Head of caudate nucleus (tissue), 42 donors: ENCODE measurements at regions of chr1 and their contacts with region 1.

Region 1: GRCh38 chr1:201254625-201255506 is 28.4 kb upstream of the PKP1 start:
- DNase-seq: peak in 41 of 42 donors; percentile 23 to 90 (median 72)

Region 2: DNA sequence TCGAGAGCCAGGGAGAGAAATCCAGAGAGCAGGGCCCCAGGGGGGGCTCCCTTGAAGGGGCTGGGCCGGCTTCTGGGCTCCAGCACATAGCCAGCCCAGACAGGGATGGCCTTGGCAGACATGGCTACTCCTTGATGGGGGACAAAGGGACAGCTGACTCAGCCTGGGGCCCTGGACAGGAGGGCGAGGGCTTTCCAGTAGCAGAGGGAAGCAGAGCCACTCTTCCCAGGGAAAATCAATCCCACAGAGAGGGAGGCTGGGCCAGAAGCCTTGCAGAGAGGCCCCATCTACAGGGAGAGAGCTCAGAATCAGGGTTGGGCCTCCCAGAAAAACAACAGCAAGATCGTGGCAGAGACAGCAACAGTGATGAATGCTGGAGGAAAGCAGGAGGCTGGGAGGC is 48.7 kb before region 1 on chr1:
- intact Hi-C with region 1: no loop called
- DNase-seq: peak in 2 of 42 donors; percentile 14 to 44

Region 3: DNA sequence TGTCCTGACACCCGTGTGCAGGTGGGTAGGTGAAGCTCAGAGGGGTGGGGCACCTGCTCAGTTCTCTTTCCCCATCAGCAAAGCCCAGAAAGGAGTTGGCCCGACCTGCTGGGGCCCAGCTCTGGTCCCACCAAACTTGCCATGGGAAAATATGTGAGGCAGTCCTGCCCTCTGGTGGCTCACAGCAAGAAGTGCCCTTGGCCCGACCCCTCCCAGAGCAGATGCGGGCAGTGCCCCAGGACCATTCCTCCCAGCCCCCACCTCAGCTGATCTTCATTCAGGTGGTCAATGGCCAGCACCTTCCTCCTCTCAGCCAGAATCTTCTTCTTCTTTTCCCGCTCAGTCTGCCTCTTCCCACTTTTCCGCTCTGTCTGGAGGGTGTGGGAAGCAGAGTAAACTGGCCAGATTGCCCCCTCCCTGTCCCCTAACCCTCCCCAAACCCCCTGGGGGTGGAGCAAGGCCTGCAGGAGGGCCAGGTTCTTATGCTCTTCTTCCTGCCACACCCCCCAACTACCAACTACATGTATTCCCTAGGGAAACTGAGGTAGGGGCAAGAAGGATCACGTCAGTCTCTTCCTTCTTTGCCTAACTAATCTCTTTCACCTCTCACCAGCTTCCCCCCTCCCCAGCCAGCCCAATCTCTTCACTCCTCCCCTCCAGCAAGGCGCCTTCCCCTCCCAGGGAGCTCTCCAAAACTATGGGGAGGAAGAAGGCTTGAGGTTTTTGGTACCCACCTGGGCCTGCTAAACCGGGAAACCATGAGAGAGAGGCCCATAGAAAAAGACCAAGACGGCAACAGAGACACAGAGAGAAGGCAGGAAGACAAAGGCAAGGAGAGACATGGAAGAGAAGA is 107.0 kb after region 1 on chr1:
- intact Hi-C with region 1: loop called (anchors 2 kb)
- DNase-seq: peak; percentile 16 to 83 (median 52)

Region 4: DNA sequence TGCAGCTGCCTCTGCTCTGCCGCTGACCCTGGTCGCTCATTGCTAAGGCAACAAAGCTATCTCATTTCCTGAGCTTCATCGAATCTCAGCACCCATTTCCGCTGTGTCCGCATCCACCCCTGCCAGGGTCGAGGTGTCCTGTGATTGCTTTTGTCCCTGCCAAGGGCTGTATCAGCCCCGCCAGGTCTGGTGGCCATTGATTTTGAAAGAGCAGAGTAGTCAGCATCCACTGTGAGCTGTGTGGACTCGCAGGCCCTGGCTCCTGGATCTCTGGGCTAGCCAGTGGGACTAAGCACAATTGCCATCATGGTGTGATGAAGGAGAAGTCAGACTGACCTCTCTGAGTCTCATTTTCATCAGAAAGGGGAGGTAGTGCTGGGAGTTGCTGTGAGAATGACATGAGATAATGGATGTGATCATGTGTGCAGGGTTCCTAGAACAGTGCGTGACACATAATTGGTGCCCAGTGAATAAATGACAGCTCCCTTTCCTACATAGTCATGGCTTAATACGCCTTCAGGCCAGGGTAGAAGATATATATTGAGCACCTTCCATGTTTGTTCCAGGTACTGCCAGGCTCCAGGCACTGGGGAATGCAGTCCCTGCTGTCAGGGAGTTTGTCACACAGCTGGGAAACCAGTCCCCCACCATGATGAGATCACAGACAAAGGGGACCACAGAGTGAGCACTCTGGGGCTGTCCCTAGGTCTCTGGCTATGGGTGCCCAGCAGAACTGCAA is 316.2 kb after region 1 on chr1:
- intact Hi-C with region 1: no loop called
- DNase-seq: peak in 2 of 42 donors; percentile 18 to 45